ENCODE measurements at regions of chr2 and their contacts with region 1.

Region 1: DNA sequence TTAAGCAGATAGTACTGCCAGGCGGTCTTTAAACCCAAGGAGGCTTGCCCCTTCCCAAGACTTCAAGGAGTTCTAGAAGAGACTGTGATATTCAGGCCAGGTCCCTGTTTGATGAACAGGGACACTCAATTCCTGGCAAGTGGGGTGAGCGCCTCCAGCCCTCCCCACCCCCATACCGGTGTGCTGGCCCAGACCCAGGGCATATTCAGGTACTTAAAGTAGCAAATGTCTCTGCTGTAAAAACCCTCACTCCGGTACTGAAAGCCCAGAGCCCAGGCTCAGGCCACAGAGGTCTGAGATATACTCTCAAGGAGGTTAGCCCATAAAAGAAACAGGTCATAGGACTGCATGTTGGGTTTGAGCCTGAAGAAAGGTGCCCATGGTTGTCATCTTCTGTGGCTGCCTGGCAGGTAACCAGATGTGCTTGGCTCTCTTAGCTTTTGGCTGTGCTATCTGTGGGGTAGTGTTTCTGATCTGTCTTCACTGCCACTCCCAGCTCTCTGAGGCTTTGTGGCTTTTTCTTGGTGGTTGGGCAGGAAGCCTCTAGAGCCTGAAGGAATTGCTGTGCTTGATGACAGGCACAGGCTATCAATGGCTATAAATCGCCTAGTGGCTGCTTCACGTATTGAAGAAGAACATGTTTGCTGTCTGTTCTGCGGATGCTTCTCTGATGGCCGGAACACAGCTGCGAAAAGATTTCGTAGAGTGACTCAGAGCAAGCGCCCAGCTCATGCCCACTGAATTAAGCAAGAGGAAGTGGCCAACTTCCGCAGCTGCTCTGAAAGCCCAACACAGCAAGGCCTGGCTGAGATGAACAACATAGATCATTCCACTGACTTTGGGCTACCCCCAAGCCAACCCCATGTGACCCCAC is 63.3 kb upstream of the ALPP start:
- DNase-seq: peak; percentile 45 to 91 (median 79)
- ATAC-seq: peak; percentile 83
- H3K4me3 ChIP-seq: peak overlapping the region; percentile 1 to 36
- H3K4me3 Mint-ChIP-seq: peak overlapping the region; percentile 61
- H3K27ac ChIP-seq: peak overlapping the region; percentile 49 to 80
- H3K27ac Mint-ChIP-seq: peak overlapping the region; percentile 96
- H3K4me1 ChIP-seq: peaks cover 97% of the 10 kb centered on the region
- H3K4me1 Mint-ChIP-seq: peaks cover 95% of the 10 kb centered on the region
- H3K27me3 ChIP-seq: no peaks in the 10 kb centered on the region
- H3K27me3 Mint-ChIP-seq: no peaks in the 10 kb centered on the region
- CTCF ChIP-seq: peak; percentile 48

Region 2: DNA sequence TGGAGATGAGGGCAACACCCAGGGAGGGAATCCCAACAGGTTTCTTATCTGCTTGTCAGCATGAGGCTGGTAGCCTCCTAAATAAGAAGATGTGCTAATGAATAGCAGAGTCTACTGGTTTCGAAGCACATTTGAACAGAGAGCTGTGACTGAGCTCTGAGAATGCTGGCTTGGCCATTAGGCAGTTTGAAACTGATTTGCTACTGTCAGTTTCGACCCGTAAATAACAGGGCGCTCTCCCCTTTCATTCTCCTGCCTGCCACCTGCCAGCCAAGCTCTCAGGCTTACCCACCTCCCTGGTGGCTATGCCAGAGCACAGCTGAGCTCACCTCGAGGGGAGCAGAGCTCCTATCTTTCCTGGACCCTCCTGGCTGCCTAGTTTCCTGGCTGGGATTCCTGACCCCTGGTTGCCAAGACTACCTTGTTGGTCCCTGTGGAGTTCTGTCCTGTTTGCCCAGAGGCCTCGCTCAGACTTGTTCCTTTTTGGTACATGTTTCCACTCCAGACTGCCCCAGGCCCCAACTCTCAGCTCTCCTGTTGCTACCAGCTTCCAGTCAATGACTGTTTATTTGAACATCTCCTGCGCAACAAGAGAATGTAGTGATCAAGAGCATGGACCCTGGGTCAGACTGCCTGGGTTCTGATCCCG is 39.1 kb before region 1 on chr2:
- CTCF ChIA-PET with region 1: interaction called, 3 read pairs
- POLR2A ChIA-PET with region 1: no interaction called
- intact Hi-C with region 1: loop called (anchors 5 to 10 kb)
- DNase-seq: no peak
- ATAC-seq: no peak
- H3K4me3 ChIP-seq: no peak overlapping the region
- H3K4me3 Mint-ChIP-seq: no peak overlapping the region
- H3K27ac ChIP-seq: no peak overlapping the region
- H3K27ac Mint-ChIP-seq: no peak overlapping the region
- H3K4me1 ChIP-seq: no peaks in the 10 kb centered on the region
- H3K4me1 Mint-ChIP-seq: peaks cover 9% of the 10 kb centered on the region
- H3K27me3 ChIP-seq: no peaks in the 10 kb centered on the region
- H3K27me3 Mint-ChIP-seq: no peaks in the 10 kb centered on the region
- CTCF ChIP-seq: no peak

Region 3: GRCh38 chr2:232286001-232286868 is 29.1 kb before region 1 on chr2:
- CTCF ChIA-PET with region 1: interaction called, 12 read pairs
- POLR2A ChIA-PET with region 1: interaction called, 17 read pairs
- intact Hi-C with region 1: loop called in 1 of 2 experiments (anchors 5 kb)
- DNase-seq: peak in 1 of 9 experiments; percentile 28
- ATAC-seq: peak; percentile 63
- H3K4me3 ChIP-seq: no peak overlapping the region
- H3K4me3 Mint-ChIP-seq: peak overlapping the region; percentile 26
- H3K27ac ChIP-seq: peak overlapping the region; percentile 13 to 62
- H3K27ac Mint-ChIP-seq: peak overlapping the region; percentile 94
- H3K4me1 ChIP-seq: peaks cover 47% of the 10 kb centered on the region
- H3K4me1 Mint-ChIP-seq: peaks cover 57% of the 10 kb centered on the region
- H3K27me3 ChIP-seq: no peaks in the 10 kb centered on the region
- H3K27me3 Mint-ChIP-seq: no peaks in the 10 kb centered on the region
- CTCF ChIP-seq: no peak

Region 4: GRCh38 chr2:232292395-232293154 is 22.7 kb before region 1 on chr2:
- CTCF ChIA-PET with region 1: interaction called, 31 read pairs
- POLR2A ChIA-PET with region 1: interaction called, 17 read pairs
- intact Hi-C with region 1: no loop called
- DNase-seq: peak in 7 of 9 experiments; percentile 31 to 67 (median 53)
- ATAC-seq: peak; percentile 62
- H3K4me3 ChIP-seq: no peak overlapping the region
- H3K4me3 Mint-ChIP-seq: no peak overlapping the region
- H3K27ac ChIP-seq: no peak overlapping the region
- H3K27ac Mint-ChIP-seq: no peak overlapping the region
- H3K4me1 ChIP-seq: peaks cover 23% of the 10 kb centered on the region
- H3K4me1 Mint-ChIP-seq: peaks cover 26% of the 10 kb centered on the region
- H3K27me3 ChIP-seq: no peaks in the 10 kb centered on the region
- H3K27me3 Mint-ChIP-seq: no peaks in the 10 kb centered on the region
- CTCF ChIP-seq: peak; percentile 53

Region 5: DNA sequence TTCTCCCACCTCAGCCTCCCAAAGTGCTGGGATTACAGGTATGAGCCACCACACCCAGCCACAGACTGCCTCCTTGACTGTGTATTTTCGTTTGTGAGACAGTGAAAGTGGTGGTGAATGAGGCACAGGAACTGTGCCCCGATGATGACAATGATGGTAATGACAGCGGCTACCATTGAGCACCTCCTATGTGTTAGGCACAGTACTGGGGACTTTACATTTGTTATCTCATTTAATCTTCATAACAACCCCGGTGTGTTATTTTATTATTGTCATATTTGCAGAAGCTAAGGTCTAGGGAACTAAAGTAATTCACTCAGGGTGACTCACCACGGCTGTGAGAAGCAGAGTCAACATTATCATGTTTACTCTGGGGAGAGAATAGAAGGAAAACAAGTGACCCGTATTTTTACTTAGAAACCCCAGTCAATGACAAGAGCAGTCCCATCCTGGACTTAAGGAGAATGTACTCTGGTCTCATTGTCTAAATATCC is 14.3 kb before region 1 on chr2:
- CTCF ChIA-PET with region 1: interaction called, 19 read pairs
- POLR2A ChIA-PET with region 1: interaction called, 7 read pairs
- intact Hi-C with region 1: loop called in 1 of 2 experiments (anchors 2 kb)
- DNase-seq: no peak
- ATAC-seq: peak; percentile 44
- H3K4me3 ChIP-seq: no peak overlapping the region
- H3K4me3 Mint-ChIP-seq: no peak overlapping the region
- H3K27ac ChIP-seq: no peak overlapping the region
- H3K27ac Mint-ChIP-seq: peak overlapping the region; percentile 39
- H3K4me1 ChIP-seq: peaks cover 27% of the 10 kb centered on the region
- H3K4me1 Mint-ChIP-seq: peaks cover 33% of the 10 kb centered on the region
- H3K27me3 ChIP-seq: no peaks in the 10 kb centered on the region
- H3K27me3 Mint-ChIP-seq: no peaks in the 10 kb centered on the region
- CTCF ChIP-seq: no peak

Region 6: DNA sequence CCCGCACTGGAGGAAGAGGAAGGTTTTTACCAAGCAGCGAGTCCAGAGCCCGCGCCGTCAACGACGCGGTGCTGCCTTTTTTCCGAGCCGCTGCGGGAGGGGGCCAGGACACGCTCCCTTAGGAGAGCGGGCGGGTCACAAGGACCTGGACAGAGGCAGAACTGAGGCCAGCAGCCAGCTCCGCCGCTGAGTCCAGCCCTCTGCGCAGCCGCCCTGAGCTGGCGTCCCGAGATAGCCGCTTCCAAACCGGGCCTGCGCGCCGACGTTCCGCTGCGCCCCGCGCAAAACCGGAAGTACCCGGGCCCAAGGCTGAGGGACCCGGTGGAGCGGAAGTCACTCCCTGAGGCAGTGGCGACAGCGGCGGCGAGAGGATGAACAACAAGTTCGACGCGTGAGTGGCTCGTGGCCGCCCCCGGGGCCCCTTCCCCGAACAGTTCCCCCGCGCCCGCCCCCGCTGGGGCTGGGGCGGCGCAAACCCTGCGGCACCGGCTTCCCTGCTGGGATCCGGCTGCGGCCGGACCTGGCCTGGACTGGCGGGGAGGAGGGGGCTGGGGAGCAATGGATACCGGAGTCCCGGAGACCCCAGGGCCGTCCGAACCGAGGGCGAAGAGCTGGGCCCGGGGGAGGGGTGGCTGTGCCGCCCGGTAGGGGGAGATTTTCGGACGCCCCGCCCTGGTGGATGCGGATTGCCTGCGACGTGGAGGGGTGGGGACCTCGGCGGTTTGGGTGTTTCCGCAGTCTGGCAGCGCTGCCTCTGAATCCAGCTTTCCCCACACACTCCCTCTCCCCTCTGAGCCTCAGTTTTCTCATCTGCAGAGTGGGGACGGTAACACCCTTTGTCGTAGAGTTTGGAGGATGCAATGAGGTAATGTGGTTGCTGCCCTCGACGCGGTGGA is 235.3 kb after region 1 on chr2 and contains the starts of genes EIF4E2 and TIGD1:
- CTCF ChIA-PET with region 1: no interaction called
- POLR2A ChIA-PET with region 1: interaction called, 3 read pairs
- intact Hi-C with region 1: loop called in 1 of 2 experiments (anchors 5 kb)
- DNase-seq: peak; percentile 78 to 94 (median 91)
- ATAC-seq: peak; percentile 82
- H3K4me3 ChIP-seq: peak within 1 kb of the TSS; percentile 74 to 91
- H3K4me3 Mint-ChIP-seq: peak within 1 kb of the TSS; percentile 100
- H3K27ac ChIP-seq: peak within 1 kb of the TSS; percentile 86 to 88
- H3K27ac Mint-ChIP-seq: peak within 1 kb of the TSS; percentile 100
- H3K4me1 ChIP-seq: peaks cover 28% of the 10 kb centered on the region
- H3K4me1 Mint-ChIP-seq: peaks cover 80% of the 10 kb centered on the region
- H3K27me3 ChIP-seq: no peaks in the 10 kb centered on the region
- H3K27me3 Mint-ChIP-seq: no peaks in the 10 kb centered on the region
- CTCF ChIP-seq: peak; percentile 55
- total RNA-seq, gene EIF4E2: 53.8 to 55.2 TPM
- total RNA-seq, gene TIGD1: 16.5 to 17.2 TPM

Region 7: DNA sequence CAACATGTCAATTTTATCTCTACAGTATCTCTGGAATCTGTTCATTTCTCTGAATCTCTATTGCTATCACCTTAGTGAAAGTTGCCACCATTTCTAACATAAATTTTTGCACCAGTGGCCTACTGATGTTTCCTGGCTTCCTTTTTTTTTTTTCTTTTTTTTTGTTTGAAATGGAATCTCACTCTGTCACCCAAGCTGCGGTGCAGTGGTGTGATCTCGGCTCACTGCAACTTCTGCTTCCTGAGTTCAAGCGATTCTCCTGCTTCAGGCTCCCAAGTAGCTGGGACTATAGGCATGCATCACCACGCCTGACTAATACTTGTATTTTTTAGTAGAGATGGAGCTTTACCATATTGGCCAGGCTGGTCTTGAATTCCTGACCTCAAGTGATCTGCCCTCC is 426.0 kb after region 1 on chr2:
- CTCF ChIA-PET with region 1: no interaction called
- POLR2A ChIA-PET with region 1: no interaction called
- intact Hi-C with region 1: no loop called
- DNase-seq: no peak
- ATAC-seq: no peak
- H3K4me3 ChIP-seq: no peak overlapping the region
- H3K4me3 Mint-ChIP-seq: no peak overlapping the region
- H3K27ac ChIP-seq: no peak overlapping the region
- H3K27ac Mint-ChIP-seq: no peak overlapping the region
- H3K4me1 ChIP-seq: no peaks in the 10 kb centered on the region
- H3K4me1 Mint-ChIP-seq: peaks cover 10% of the 10 kb centered on the region
- H3K27me3 ChIP-seq: no peaks in the 10 kb centered on the region
- H3K27me3 Mint-ChIP-seq: no peaks in the 10 kb centered on the region
- CTCF ChIP-seq: no peak

Measured in CD8-positive, alpha-beta T cell (primary cell).